ENCODE measurements at regions of chr5 and their contacts with region 1.

Region 1: GRCh38 chr5:167723254-167723871 is 568.1 kb upstream of the WWC1 start:
- DNase-seq: peak; percentile 79
- ATAC-seq: peak; percentile 72
- H3K4me3 ChIP-seq: no peak overlapping the region
- H3K27ac ChIP-seq: no peak overlapping the region
- H3K4me1 ChIP-seq: 0 out of 2 replicates have a peak, but pooled peaks cover 6% of the 10 kb centered on the region
- H3K27me3 ChIP-seq: no peaks in the 10 kb centered on the region
- CTCF ChIP-seq: peak; percentile 81

Region 2: GRCh38 chr5:167587772-167588437 is 135.5 kb before region 1 on chr5:
- CTCF ChIA-PET with region 1: interaction called, 3 read pairs
- POLR2A ChIA-PET with region 1: no interaction called
- intact Hi-C with region 1: loop called (anchors 5 kb)
- DNase-seq: peak; percentile 50
- ATAC-seq: peak; percentile 79
- H3K4me3 ChIP-seq: no peak overlapping the region
- H3K27ac ChIP-seq: no peak overlapping the region
- H3K4me1 ChIP-seq: no peaks in the 10 kb centered on the region
- H3K27me3 ChIP-seq: peaks cover 46% of the 10 kb centered on the region
- CTCF ChIP-seq: peak; percentile 45; the same call in 1 of the 2 replicates

Region 3: GRCh38 chr5:167642779-167643517 is 80.4 kb before region 1 on chr5:
- CTCF ChIA-PET with region 1: no interaction called
- POLR2A ChIA-PET with region 1: no interaction called
- intact Hi-C with region 1: loop called (anchors 5 kb)
- DNase-seq: peak; percentile 76
- ATAC-seq: peak; percentile 59
- H3K4me3 ChIP-seq: no peak overlapping the region
- H3K27ac ChIP-seq: peak overlapping the region; percentile 59
- H3K4me1 ChIP-seq: peaks cover 31% of the 10 kb centered on the region
- H3K27me3 ChIP-seq: no peaks in the 10 kb centered on the region
- CTCF ChIP-seq: no peak

Measured in PC-3 (cell line).